Activated CD8-positive, alpha-beta T cell treated with anti-CD3 and anti-CD28 coated beads, Interleukin-2, amount 10 ng/mL, durations not matched to agents 7 days and 5 days (primary cell): ENCODE measurements at regions of chr2 and their contacts with region 1.

Region 1: DNA sequence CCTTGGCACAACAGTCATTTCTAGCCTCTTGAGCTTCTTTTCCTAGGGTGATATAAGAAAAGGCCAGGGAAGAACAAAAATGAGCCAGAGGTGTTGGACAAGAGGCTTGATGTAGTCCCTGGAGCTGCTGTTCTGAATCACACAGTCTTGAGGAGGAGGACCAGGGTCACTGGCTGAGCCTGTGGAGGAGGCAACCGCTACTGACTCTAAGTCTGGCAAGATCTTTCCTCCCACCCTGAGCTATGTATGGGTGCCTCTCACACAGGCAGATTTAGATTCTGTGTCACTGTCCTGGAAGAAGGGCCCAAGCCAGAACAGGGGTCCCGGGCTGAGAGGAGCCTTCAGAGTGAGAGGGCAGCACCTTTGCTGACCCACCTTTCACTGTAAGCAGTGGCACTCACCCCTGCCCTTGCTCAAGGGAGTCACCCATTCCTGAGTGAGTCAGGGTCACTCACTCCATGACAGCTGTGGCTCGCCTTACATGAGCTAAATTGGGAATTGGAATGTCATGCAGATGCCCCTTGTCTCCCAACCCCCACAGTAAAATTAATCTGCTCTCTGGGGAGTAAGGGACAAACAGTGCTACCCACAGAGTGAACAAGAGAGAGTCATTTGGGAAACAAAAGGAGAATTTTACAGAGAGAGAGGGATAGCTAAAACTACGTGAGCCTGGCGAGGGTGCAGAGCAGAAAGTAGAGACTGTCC is at the start of gene TRIM54:
- DNase-seq: no peak
- ATAC-seq: no peak
- H3K4me3 Mint-ChIP-seq: no peak within 1 kb of the TSS
- H3K27ac Mint-ChIP-seq: no peak within 1 kb of the TSS
- H3K4me1 Mint-ChIP-seq: peaks cover 6% of the 10 kb centered on the region
- H3K27me3 Mint-ChIP-seq: peaks cover 45% of the 10 kb centered on the region
- total RNA-seq, gene TRIM54: 0.26 to 0.31 TPM

Region 2: GRCh38 chr2:26469092-26469710 is 812.8 kb before region 1 on chr2:
- CTCF ChIA-PET with region 1: no interaction called
- POLR2A ChIA-PET with region 1: no interaction called
- DNase-seq: peak; percentile 82
- ATAC-seq: peak; percentile 43
- H3K4me3 Mint-ChIP-seq: no peak overlapping the region
- H3K27ac Mint-ChIP-seq: peak overlapping the region; percentile 5
- H3K4me1 Mint-ChIP-seq: no peaks in the 10 kb centered on the region
- H3K27me3 Mint-ChIP-seq: no peaks in the 10 kb centered on the region

Region 3: DNA sequence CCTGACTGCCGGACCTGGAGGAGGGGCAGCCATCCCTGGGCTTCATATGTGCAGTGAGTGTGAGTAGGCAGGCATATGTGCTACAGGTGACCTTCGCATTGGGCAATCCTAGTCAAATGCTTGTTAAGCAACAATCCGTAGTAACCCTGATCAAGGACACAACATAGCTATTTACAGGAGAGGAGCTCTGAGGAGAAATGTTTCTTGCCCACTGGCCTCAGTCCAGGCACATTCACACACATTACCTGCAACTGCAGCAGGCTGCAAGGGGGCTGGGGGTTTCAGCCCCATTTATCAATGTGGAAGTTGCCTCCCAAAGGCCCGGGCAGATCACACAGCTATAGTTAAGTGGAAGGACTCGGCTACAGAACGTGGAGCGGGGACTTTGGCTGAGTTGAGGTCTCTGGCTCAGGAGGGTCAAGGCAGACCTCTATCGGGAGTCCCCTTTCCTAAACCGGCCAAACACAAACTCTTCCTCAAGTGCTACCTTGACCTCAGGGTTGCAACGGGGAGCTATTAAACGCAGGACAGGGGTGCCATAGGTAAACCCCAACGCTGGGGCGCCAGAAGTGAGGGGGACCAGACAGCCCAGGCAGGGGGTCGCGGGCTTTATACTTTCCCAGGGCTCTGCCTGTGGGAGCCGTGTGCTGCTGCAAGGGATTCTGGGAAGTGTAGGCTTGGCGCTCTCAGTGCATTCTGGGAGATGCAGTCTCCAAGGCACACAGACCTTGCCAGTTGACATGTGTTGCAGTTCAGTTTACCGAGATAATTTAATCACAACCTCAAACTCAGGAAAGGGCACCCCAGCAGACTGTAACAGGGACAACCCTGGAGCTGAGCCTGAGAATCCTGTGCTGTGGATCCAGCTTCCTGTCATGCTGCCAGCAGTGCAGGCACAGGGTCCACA is 186.0 kb before region 1 on chr2:
- CTCF ChIA-PET with region 1: interaction called, 26 read pairs
- POLR2A ChIA-PET with region 1: no interaction called
- DNase-seq: peak; percentile 61
- ATAC-seq: peak; percentile 76
- H3K4me3 Mint-ChIP-seq: peak overlapping the region; percentile 29
- H3K27ac Mint-ChIP-seq: peak overlapping the region; percentile 60
- H3K4me1 Mint-ChIP-seq: peaks cover 14% of the 10 kb centered on the region
- H3K27me3 Mint-ChIP-seq: no peaks in the 10 kb centered on the region

Region 4: DNA sequence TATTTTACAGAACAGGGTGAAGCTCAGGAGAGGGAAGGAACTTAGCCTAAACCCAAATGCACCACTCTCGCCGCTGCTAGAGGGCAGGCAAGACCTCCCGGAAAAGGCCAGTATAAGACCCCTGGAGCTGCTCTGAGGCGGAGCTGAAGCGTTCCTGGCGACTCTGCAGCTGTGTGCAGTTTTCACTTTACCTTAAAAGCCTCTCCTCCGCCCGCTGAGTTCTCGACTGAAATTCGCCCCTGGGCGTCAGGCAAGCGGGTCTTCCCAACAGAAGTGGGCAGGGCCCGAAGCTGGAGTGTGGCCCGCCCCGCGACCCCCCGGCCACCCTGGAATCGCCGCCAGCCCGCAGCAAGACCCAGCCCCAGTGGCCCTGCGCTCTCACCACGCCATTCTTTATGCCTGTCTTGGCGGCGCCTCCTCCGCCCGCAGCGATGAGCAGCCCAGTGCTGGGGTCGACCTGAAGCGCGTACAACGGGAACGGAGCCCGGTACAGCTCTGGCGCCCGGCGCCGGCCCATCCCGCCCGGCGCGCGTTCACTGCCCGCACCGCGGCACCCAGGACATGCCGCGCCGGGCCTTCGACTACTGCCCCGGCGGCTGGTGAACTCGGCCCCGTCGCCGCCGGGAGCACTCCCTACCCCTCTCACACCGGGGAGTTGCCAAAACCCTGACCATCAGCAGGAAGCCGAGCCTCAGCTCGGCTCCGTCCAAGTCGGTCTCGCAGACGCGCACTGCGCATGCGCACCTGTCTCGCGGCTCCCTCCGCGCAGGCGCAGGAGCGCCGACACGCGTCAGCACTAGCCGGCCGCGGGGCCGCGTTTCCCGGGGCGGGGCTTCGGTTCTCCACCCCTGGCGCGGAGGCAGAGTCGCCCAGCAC is 147.9 kb before region 1 on chr2 and contains the start of gene PREB:
- CTCF ChIA-PET with region 1: interaction called, 13 read pairs
- POLR2A ChIA-PET with region 1: interaction called, 3 read pairs
- DNase-seq: peak; percentile 98
- ATAC-seq: peak; percentile 96
- H3K4me3 Mint-ChIP-seq: peak within 1 kb of the TSS; percentile 94
- H3K27ac Mint-ChIP-seq: peak within 1 kb of the TSS; percentile 97
- H3K4me1 Mint-ChIP-seq: peaks cover 29% of the 10 kb centered on the region
- H3K27me3 Mint-ChIP-seq: no peaks in the 10 kb centered on the region
- total RNA-seq, gene PREB: 66.5 to 72.1 TPM

Region 5: DNA sequence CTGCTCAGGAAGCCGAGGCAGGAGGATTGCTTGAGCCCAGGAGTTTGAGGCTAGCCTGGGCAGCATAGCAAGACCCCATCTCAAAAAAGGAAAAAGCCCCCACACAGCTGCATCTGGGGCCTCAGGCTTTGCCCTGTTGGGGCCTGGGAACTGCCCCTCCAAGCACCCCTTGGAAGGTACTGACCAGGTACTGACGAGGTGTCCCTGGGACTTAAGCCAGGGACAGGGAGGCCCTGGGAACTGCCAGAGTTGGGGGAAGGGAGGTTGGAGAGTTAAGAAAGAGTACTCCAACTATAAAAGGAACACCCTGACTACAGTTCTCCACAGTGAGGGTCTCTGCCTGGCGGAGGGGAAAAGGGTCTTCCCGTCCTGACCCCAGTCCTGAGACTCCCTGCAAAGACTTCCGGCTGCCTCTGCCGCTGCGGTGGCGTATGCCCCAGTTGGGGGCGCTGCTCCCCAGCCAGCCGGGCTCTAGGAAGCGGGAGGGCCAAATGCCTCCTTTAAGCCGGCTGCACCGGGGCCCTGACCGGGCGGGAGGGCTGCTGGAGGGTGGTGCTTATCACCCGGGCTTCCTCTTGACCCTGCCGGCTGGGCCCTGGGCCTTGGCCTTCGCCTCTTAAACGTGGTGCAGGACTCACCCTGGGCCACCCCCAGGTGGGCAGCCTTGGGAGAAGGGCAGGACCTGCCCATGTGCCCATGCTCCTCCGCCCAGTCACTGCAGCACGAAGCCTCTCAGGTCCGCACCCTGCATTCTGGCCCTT is 31.9 kb before region 1 on chr2:
- CTCF ChIA-PET with region 1: interaction called, 70 read pairs
- POLR2A ChIA-PET with region 1: no interaction called
- DNase-seq: peak; percentile 70
- ATAC-seq: peak; percentile 81
- H3K4me3 Mint-ChIP-seq: no peak overlapping the region
- H3K27ac Mint-ChIP-seq: no peak overlapping the region
- H3K4me1 Mint-ChIP-seq: no peaks in the 10 kb centered on the region
- H3K27me3 Mint-ChIP-seq: peaks cover 2% of the 10 kb centered on the region

Region 6: DNA sequence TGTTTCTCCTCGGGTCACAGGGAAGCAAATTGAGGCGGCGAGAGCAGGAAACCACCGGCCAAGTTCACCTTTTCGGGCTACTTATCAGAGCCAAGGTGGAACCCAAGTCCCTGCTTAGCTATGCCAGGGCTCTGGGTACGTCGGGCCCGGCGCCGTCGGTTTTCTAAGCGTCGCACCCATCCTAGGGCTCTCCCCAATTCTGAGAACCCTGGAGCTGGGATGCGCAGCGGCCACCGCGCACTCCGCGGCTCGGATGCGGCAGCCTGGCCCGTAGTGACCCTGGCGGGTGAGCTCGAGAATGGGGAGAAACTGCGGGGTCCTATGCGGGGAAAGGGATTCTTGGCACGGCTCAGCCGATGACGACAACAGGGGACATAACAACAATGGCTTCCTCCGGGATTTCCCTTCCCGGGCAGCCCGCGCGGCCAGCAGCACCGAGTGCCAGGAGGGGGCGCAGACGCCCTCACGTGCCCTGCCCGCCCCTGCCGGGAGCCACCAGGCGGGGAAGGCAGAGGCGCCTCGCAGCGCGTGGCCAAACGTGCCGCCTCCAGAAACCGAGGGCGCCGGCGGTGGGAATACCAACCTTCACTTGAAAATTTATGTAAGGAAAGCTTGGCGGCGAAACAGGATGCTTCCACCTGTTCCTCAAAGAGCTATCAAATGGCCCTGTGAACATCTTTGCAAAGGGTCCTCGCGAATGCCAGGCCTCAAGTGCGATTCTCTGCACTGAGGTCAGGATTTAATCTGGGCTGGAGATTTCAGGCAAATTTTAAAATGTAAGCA is 17.1 kb before region 1 on chr2:
- CTCF ChIA-PET with region 1: interaction called, 90 read pairs
- POLR2A ChIA-PET with region 1: interaction called, 3 read pairs
- DNase-seq: peak; percentile 43
- ATAC-seq: peak; percentile 50
- H3K4me3 Mint-ChIP-seq: peak overlapping the region; percentile 48
- H3K27ac Mint-ChIP-seq: no peak overlapping the region
- H3K4me1 Mint-ChIP-seq: peaks cover 26% of the 10 kb centered on the region
- H3K27me3 Mint-ChIP-seq: peaks cover 43% of the 10 kb centered on the region

Region 7: DNA sequence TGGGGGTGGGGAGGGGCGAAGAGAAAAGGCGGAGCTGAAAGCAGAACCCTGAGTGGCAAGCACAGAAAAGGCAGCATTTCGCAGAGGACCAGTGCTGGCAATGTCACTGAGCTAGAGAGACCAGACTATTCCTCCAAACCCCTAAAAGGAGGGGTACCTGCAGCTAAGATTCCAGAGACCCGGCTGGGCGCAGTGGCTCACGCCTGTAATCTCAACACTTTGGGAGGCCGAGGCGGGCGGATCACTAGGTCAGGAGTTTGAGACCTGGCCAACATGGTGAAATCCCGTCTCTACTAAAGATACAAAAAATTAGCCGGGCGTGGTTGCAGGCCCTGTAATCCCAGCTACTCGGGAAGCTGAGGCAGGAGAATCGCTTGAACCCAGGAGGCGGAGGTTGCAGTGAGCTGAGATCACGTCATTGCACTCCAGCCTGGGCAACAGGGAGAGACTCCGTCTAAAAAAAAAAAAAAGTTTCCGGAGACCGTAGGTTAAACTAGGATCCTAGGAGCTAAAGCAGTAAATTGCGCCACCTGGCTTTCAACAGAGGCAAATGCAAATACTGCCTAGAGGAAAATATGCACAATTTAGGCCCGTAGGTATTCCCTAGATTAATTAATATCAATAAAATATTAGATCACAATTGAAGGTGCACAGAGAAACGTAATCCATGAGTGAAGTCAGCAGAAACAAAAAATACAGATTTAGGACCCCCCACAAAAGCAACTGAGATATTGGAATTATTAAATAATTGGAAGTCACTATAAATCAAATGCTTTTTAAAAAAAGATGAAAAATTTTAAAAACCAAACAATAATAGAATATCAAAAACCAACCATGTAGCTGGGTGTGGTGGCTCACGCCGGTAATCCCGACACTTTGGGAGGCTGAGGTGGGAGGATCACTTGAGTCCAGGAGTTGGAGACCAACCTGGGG is 21.4 kb after region 1 on chr2:
- CTCF ChIA-PET with region 1: interaction called, 74 read pairs
- POLR2A ChIA-PET with region 1: no interaction called
- DNase-seq: peak; percentile 66
- ATAC-seq: peak; percentile 57
- H3K4me3 Mint-ChIP-seq: peak overlapping the region; percentile 56
- H3K27ac Mint-ChIP-seq: peak overlapping the region; percentile 58
- H3K4me1 Mint-ChIP-seq: peaks cover 13% of the 10 kb centered on the region
- H3K27me3 Mint-ChIP-seq: peaks cover 4% of the 10 kb centered on the region

Region 8: DNA sequence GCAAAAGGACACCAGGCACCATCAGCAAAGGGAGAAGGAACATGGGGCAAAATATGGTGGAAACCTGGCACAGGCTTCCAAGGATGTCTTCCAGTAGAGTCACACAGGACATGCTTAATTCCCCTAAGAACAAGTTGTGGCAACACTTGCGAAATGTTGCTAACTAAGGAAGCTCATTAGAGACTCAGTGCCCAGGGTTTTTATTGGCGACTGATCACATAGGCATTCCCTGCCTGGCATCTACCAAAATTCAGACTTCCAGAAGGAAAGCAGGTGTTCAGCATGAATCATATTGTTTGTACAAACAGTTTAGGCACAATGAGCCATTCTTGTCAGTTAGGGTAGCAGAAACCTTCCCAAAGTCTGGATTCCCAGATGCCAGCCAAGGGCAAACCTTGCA is 407.4 kb after region 1 on chr2:
- CTCF ChIA-PET with region 1: no interaction called
- POLR2A ChIA-PET with region 1: no interaction called
- DNase-seq: no peak
- ATAC-seq: no peak
- H3K4me3 Mint-ChIP-seq: no peak overlapping the region
- H3K27ac Mint-ChIP-seq: no peak overlapping the region
- H3K4me1 Mint-ChIP-seq: peaks cover 17% of the 10 kb centered on the region
- H3K27me3 Mint-ChIP-seq: no peaks in the 10 kb centered on the region